AG04449 (cell line): ENCODE measurements at regions of chr1 and their contacts with region 1.

Region 1: GRCh38 chr1:64823691-64824476 is 79.0 kb downstream of the RAVER2 start:
- DNase-seq: peak; percentile 16
- H3K4me3 ChIP-seq: no peak overlapping the region; the same call in 1 of the 2 replicates
- CTCF ChIP-seq: peak; percentile 67

Region 2: DNA sequence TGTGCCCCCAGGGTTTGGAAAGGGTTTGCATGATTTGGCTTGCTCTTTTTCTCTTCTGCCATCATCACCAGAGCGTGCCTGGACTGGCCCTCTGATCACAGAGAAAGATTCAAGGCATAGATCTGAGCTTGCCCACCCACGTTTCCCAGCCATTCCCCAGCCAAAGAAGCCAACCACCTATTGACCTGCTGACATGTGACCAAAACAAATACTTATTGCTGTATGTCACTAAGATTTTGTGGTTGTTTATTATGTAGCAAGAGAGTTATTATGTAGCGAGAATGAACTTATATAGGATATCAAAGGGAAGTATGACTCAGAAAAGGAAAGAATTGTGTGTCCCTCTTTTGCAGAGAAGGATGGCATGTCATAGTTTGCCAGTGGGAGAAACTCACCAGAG is 560.5 kb before region 1 on chr1:
- CTCF ChIA-PET with region 1: interaction called, 114 read pairs
- POLR2A ChIA-PET with region 1: no interaction called
- DNase-seq: no peak
- H3K4me3 ChIP-seq: no peak overlapping the region
- CTCF ChIP-seq: no peak

Region 3: DNA sequence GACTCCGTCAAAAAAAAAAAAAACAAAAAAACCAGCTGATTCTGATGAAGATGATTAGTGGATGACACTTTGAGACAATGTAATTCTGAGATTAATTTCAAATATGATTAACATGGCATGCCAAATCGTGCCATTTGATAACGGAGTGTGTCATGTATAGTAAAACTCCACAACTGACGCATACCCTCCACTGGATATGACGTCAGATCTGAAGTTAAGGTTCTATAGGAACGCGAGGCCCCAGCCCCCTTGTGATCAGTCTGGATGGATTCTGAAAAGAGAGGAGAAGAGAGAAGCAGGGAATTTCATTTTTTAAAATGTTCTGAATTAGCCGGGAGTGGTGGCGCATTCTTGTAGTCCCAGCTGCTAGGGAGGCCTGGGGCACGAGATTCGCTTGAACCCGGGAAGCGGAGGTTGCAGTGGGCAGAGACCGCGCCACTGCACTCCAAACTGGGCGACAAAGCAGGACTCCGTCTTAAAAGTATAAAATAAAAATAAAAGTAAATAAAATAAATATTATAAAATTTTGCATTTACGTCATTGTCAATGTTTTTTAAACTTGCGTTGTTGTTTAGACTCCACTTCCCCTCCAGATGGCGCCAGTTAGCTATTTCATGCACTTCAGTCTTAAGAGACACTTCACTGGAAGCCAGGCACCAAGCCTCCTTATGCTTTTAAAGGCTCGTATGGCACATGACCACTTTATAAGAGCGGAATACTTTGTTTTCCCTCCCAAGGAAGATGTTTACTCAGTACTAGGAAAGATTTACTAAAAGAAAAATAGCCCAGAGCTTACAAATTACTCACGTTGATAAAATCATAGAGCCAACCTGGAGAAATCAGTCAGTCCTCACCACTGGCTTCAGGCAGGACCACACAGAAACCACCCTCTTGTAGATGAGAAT is 555.0 kb before region 1 on chr1:
- CTCF ChIA-PET with region 1: interaction called, 114 read pairs
- POLR2A ChIA-PET with region 1: no interaction called
- DNase-seq: peak; percentile 38
- H3K4me3 ChIP-seq: no peak overlapping the region
- CTCF ChIP-seq: peak; percentile 55

Region 4: DNA sequence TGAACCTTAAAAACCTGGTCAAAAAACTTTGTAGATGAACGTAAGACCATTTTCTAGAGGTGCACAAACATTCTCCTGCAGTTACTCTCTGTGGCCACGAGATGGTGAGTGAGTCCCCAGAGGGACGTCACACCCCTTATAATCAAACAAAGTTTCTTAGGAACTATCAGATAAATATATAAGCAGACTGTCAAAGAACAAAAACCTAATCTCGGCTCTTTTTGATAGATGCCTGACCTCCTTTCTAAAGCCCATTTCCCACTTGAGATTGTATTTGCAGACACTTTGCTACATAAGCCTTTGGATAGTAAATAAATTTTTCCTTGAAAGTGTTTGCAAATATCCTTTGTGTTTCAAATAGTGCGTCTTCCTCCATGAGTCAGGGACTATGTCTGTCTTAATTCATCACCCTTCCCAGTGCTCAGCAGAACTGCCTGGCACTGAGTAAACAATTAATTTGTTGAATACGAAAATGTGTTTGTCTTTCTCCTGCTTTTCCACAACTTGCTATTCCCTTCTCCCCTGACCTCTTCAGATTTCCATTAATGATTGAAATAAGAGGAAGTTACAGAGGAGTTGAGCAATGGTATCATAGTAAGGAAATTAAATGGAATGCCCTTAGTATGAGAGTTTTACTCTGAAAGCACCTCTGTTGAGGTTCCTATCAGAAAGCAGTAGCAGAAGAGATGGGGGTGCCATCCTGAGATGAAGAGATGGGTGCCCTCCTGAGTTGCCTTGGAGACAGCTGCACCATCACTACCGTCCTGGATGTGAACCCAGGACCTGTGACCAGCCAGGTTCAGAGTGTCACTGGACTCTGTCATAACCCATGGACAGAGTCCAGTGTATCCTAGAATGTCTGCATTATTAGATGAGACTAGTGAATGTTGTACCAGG is 136.8 kb before region 1 on chr1:
- CTCF ChIA-PET with region 1: interaction called, 15 read pairs
- POLR2A ChIA-PET with region 1: no interaction called
- DNase-seq: peak; percentile 16
- H3K4me3 ChIP-seq: no peak overlapping the region
- CTCF ChIP-seq: peak; percentile 66

Region 5: DNA sequence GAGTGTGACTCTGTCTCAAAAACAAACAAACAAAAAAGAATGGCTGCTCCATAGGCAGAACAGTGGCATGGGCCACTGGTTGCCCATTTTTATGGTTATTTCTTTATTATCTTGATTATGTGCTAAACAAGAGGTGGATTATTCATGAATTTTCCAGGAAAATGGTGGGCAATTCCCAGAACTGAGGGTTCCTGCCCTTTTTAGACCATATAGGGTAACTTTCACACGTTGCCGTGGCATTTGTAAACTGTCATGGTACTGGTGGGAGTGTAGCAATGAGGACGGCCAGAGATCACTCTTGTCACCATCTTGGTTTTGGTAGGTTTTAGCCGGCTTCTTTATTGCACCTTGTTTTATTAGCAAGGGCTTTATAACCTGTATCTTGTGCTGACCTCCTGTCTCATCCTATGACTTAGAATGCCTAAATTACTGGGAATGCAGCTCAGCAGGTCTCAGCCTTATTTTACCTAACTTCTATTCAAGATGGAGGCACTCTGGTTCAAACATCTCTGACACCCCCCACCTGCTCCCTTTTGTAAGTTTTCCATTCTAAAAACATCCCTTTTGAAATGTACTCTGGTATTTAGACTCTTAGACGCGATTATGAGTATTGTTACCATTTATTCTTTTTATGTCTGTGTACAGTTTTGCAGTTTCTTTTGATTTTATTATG is 21.9 kb before region 1 on chr1:
- CTCF ChIA-PET with region 1: interaction called, 20 read pairs
- POLR2A ChIA-PET with region 1: no interaction called
- DNase-seq: no peak
- H3K4me3 ChIP-seq: no peak overlapping the region
- CTCF ChIP-seq: no peak

Region 6: GRCh38 chr1:64834734-64835133 is 10.8 kb after region 1 on chr1:
- CTCF ChIA-PET with region 1: interaction called, 28 read pairs
- POLR2A ChIA-PET with region 1: no interaction called
- DNase-seq: peak; percentile 49
- H3K4me3 ChIP-seq: no peak overlapping the region
- CTCF ChIP-seq: no peak

Region 7: DNA sequence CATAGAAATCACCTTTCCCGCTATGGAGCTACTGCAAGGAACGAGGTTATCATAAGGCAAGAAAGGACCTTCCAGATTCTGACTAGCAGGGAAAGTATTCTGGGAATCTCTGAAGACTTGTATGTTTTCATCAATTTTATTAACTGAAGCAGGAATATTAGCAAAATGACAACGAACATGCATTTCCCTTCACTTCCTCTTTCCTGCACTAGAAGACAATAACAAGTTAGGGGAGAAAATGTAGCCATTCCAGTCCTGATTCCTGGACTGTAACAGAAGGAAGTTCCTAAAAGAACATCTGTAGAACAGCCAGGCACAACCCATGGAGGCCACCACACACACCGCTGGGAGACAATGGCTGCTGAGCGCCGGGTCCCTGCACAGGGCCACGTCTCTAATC is 27.8 kb after region 1 on chr1:
- CTCF ChIA-PET with region 1: no interaction called
- POLR2A ChIA-PET with region 1: no interaction called
- DNase-seq: no peak
- H3K4me3 ChIP-seq: no peak overlapping the region
- CTCF ChIP-seq: no peak

Region 8: DNA sequence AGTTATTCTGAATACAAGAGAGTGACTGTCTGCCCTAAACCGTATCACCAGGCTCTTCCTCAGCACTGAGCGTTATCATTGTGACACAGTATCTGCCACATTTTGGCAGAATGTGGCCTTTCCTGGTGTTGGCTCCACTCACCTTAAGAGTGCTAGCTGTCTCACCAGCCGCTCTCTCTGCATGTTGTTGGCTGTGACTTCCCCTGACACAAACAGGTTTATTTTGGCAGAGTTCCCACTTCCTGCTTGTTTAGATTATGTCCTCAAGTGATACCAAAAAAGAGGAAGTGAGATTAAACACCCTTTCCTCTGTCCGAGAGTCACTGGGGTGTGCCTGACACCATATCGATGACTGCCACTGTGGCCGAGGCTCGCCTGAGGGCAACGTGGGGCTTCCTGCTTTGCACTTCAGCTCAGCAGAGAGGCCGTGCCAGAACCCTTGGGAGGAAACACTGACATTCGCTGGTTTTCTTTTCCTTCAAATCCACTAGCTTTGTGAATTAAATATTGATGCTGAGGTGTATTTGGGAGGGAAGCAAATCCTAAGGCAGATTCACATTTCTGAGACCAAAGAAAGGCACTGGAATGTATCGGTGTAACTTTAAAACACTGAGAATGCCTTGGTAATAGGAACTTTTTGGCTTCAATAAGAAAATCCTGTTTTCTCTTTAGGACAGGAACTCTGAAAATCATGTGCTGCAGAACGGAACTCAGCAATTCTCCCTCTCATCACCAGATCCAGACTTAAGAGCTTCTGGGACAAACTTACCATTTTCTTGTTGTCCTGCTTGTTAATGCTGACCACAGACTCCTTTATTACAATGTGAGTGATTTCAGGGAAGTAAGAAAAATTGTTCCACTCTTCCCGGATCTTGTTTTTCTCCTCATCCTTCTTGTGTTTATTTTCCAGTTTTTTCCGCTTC is 40.4 kb after region 1 on chr1:
- CTCF ChIA-PET with region 1: no interaction called
- POLR2A ChIA-PET with region 1: no interaction called
- DNase-seq: no peak
- H3K4me3 ChIP-seq: no peak overlapping the region
- CTCF ChIP-seq: no peak